ENCODE measurements at regions of chr12 and their contacts with region 1.

Region 1: GRCh38 chr12:116934908-116935705 is 24.4 kb downstream of the FBXW8 start:
- DNase-seq: no peak
- ATAC-seq: no peak
- H3K4me3 ChIP-seq: no peak overlapping the region
- H3K27ac ChIP-seq: no peak overlapping the region
- H3K4me1 ChIP-seq: no peaks in the 10 kb centered on the region
- H3K27me3 ChIP-seq: no peaks in the 10 kb centered on the region
- CTCF ChIP-seq: no peak

Region 2: DNA sequence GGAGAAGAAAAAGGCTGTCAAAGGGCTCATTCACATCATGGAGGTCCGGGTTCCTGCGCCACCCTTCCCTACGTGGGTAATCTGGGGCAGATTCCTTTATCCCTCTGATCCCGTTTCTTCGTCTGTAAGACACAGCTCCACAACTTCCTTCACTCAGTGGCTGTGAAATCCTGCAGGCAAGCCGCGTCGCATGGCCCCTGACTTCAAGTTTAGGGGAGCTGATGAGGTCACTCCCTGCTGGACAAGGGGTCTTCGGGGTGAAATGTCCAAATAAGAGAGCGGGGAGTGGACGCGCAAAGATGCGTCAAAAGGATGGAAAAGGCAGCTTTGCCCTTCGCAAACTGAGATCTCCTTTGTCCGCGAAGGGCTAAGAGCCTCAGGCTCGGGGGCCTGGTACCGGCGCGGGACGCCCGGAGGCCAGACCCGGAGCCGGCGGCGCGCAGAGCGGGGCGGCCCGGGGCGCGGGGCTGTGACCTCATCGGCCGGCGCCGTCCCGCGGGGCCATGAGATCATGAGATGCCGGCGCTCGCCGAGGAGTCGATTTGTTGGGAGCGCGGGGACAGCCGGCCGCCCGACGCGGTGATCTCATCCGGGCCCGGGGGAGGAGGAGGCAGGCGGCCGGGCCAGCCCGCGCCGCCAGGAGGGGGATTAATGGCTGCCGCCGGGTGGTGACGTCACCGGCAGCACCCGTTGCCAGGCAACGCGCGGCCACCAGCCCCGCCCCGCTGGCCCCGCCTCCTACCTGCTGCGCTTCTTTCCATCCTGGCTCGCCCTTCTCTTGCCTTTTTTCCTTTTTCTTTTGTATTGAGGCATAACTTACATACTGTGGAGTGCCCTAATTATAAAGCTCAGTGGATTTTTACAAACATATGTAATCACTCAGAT is 115.9 kb before region 1 on chr12:
- CTCF ChIA-PET with region 1: no interaction called
- POLR2A ChIA-PET with region 1: no interaction called
- intact Hi-C with region 1: no loop called
- DNase-seq: peak; percentile 92
- ATAC-seq: peak; percentile 92
- H3K4me3 ChIP-seq: peak overlapping the region; percentile 86
- H3K27ac ChIP-seq: peak overlapping the region; percentile 73
- H3K4me1 ChIP-seq: peaks cover 10% of the 10 kb centered on the region
- H3K27me3 ChIP-seq: no peaks in the 10 kb centered on the region
- CTCF ChIP-seq: no peak

Region 3: DNA sequence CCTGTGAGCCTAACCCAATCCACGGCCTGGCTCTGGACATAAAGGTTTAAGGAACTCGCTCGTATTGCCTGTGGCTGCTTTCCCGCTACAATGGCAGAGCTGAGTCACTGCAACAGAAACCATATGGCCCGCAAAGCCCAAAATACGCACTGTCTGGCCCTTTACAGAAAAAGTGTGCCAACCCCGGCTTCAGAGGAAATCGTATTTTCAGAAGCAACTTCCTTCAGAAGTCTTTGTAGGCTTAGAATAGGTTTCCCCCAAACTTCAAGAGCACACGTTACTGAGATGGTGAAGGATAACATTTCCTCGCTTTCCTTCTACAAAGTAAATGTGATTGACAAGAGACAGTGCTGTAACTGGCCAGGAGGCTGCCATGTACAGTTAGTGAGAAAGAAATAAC is 199.0 kb after region 1 on chr12:
- CTCF ChIA-PET with region 1: no interaction called
- POLR2A ChIA-PET with region 1: interaction called, 14 read pairs
- intact Hi-C with region 1: no loop called
- DNase-seq: no peak
- ATAC-seq: no peak
- H3K4me3 ChIP-seq: no peak overlapping the region
- H3K27ac ChIP-seq: no peak overlapping the region
- H3K4me1 ChIP-seq: peaks cover 14% of the 10 kb centered on the region
- H3K27me3 ChIP-seq: no peaks in the 10 kb centered on the region
- CTCF ChIP-seq: no peak

Measured in PC-3 (cell line).